OCI-LY7 (cell line): ENCODE measurements at regions of chr6 and their contacts with region 1.

Region 1: GRCh38 chr6:106300944-106301343 is 24.6 kb downstream of the ATG5 start:
- DNase-seq: peak; percentile 41
- H3K4me3 ChIP-seq: no peak overlapping the region
- H3K27ac ChIP-seq: no peak overlapping the region
- H3K4me1 ChIP-seq: no peaks in the 10 kb centered on the region
- CTCF ChIP-seq: peak; percentile 82

Region 2: GRCh38 chr6:105431226-105431625 is 869.7 kb before region 1 on chr6:
- CTCF ChIA-PET with region 1: no interaction called
- POLR2A ChIA-PET with region 1: no interaction called
- intact Hi-C with region 1: loop called (anchors 5 kb)
- DNase-seq: peak; percentile 58
- H3K4me3 ChIP-seq: no peak overlapping the region
- H3K27ac ChIP-seq: no peak overlapping the region
- H3K4me1 ChIP-seq: no peaks in the 10 kb centered on the region
- CTCF ChIP-seq: peak; percentile 87

Region 3: GRCh38 chr6:105484238-105485161 is 816.4 kb before region 1 on chr6:
- CTCF ChIA-PET with region 1: no interaction called
- POLR2A ChIA-PET with region 1: no interaction called
- intact Hi-C with region 1: loop called (anchors 5 kb)
- DNase-seq: peak; percentile 50
- H3K4me3 ChIP-seq: no peak overlapping the region
- H3K27ac ChIP-seq: no peak overlapping the region
- H3K4me1 ChIP-seq: peaks cover 5% of the 10 kb centered on the region
- CTCF ChIP-seq: peak; percentile 98

Region 4: DNA sequence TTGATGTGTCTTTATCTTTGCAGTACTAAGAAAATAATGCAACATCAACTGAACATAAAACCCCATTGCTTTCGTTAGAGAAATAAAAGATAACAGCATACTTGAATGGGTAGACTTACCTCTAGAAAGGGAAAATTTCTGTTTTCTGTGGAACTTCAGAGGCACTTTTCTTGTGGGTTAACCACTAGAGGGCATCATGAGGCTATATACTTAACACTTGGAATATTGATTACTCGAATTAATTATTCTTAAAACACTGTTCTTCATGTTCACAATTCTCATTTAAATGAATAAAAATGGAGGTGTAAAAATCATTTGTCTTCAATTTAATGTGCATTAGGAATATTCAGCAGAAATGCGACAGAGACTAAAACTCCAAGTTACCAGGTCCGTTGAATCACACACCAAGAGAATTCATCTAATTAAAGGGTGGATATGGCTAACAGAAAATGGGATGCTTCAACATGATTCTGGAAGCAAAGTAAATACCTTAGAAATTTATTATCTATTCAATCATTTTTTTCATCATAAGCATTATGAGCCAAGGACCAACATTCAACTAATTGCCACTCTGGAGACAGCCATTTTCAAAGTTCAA is 567.3 kb before region 1 on chr6:
- CTCF ChIA-PET with region 1: no interaction called
- POLR2A ChIA-PET with region 1: no interaction called
- intact Hi-C with region 1: loop called (anchors 10 kb)
- DNase-seq: peak; percentile 73
- H3K4me3 ChIP-seq: no peak overlapping the region
- H3K27ac ChIP-seq: no peak overlapping the region
- H3K4me1 ChIP-seq: peaks cover 3% of the 10 kb centered on the region
- CTCF ChIP-seq: peak; percentile 99